ENCODE measurements at regions of chr6 and their contacts with region 1.

Region 1: GRCh38 chr6:11496152-11497060 is 41.1 kb upstream of the TMEM170B start:
- DNase-seq: peak; percentile 80
- H3K4me3 Mint-ChIP-seq: no peak overlapping the region
- H3K27ac Mint-ChIP-seq: no peak overlapping the region
- H3K4me1 Mint-ChIP-seq: no peaks in the 10 kb centered on the region
- H3K27me3 Mint-ChIP-seq: no peaks in the 10 kb centered on the region

Region 2: DNA sequence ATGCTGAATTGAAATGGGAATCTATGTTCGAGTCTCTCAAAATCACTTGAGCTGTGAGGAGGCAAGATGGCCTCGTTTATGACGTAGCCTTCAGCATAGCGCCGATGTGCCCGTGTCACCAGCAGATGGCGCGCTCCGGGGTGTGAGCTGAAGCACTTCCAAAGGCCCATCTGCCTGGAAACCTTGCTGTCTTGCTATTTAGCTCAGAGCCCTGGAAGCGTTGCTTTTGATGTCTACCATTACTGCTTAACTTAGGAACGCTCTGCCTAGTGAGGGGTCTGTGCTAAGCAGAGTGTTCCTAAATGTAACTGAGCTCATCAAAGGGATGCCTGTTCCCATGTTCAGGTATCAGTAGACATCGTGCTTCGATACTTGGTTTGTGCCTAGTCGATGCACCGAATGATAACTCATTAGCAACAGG is 541.8 kb before region 1 on chr6:
- CTCF ChIA-PET with region 1: interaction called, 34 read pairs
- DNase-seq: peak; percentile 79
- H3K4me3 Mint-ChIP-seq: no peak overlapping the region
- H3K27ac Mint-ChIP-seq: no peak overlapping the region
- H3K4me1 Mint-ChIP-seq: no peaks in the 10 kb centered on the region
- H3K27me3 Mint-ChIP-seq: peaks cover 15% of the 10 kb centered on the region

Region 3: DNA sequence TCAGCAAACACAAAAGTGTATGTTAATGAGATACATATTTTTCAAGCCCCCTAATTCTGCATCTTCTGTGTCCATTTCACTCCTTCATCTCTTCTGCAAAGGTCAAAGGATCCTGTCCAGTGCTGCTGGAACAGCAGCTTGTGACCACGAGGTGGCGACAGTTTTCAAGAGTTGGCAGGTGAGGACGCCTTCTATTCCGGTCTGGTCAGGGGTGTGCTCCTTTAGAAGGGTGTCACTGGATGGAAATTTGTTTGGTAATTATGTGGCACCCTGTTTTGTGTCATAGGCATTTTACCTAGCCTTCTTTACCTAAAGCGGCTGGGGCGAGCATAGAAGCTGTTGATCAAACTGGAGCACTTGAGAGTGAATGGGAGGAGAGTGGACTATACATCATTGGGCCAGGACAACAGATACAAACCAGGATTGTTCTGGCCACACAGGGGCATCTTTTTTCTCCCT is 352.0 kb before region 1 on chr6:
- CTCF ChIA-PET with region 1: interaction called, 101 read pairs
- DNase-seq: peak; percentile 83
- H3K4me3 Mint-ChIP-seq: no peak overlapping the region
- H3K27ac Mint-ChIP-seq: no peak overlapping the region
- H3K4me1 Mint-ChIP-seq: no peaks in the 10 kb centered on the region
- H3K27me3 Mint-ChIP-seq: peaks cover 15% of the 10 kb centered on the region

Region 4: GRCh38 chr6:11172501-11173332 is 323.7 kb before region 1 on chr6:
- CTCF ChIA-PET with region 1: interaction called, 69 read pairs
- DNase-seq: peak; percentile 80
- H3K4me3 Mint-ChIP-seq: no peak overlapping the region
- H3K27ac Mint-ChIP-seq: no peak overlapping the region
- H3K4me1 Mint-ChIP-seq: peaks cover 13% of the 10 kb centered on the region
- H3K27me3 Mint-ChIP-seq: peaks cover 3% of the 10 kb centered on the region

Region 5: GRCh38 chr6:11381801-11382513 is 114.4 kb before region 1 on chr6:
- CTCF ChIA-PET with region 1: interaction called, 18 read pairs
- DNase-seq: peak; percentile 83
- H3K4me3 Mint-ChIP-seq: peak overlapping the region; percentile 86
- H3K27ac Mint-ChIP-seq: peak overlapping the region; percentile 96
- H3K4me1 Mint-ChIP-seq: peaks cover 62% of the 10 kb centered on the region
- H3K27me3 Mint-ChIP-seq: peaks cover 8% of the 10 kb centered on the region

Region 6: DNA sequence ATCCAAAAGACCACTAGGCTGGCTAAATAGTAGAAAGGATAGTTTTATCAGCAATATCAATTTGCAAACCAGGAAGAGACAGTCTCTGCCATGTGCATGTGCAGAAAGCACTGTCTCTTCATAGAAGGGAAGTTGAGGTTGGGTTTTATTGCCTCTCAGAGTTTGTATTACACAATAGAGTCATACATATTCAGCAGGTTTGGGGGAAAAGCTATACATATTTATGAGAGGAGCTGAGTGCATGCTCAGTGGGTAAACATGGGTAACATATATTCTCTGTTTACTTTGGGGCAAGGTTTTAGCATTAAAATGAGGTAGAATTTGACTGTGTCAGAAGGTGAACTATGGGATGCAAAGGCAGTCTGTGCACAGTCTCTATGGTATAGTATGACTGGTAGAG is 56.0 kb after region 1 on chr6:
- CTCF ChIA-PET with region 1: no interaction called
- DNase-seq: no peak
- H3K4me3 Mint-ChIP-seq: no peak overlapping the region
- H3K27ac Mint-ChIP-seq: no peak overlapping the region
- H3K4me1 Mint-ChIP-seq: no peaks in the 10 kb centered on the region
- H3K27me3 Mint-ChIP-seq: peaks cover 6% of the 10 kb centered on the region

Region 7: DNA sequence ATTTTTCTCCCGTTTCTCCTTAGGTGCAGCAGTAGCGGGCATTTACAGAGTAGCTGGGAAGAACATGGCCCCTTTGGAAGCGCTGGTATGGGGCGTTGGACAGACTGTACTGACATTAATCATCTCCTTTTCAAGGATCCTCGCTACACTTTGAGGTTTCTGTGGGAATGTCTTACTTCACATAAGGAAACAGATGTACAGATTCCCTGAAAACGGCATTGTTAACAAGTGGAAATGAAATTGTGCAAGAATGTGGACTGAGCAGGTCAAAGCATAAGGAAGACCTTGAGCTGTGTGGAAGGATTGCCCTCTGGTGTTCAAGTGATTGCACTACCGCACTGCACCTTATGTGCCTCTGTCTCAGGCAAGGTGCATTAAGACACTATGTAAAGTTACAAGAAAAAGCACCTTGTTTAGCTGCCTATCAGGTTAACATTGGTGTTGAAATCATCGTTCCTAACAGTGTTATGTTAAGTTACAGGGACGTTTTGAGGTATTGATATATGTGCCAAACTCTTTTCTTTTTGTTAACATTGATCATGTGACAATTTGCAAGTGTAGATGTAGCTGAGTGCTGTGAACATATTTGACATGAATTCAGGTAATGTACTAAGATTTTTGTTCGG is 79.1 kb after region 1 on chr6:
- CTCF ChIA-PET with region 1: interaction called, 16 read pairs
- DNase-seq: peak; percentile 68
- H3K4me3 Mint-ChIP-seq: no peak overlapping the region
- H3K27ac Mint-ChIP-seq: no peak overlapping the region
- H3K4me1 Mint-ChIP-seq: no peaks in the 10 kb centered on the region
- H3K27me3 Mint-ChIP-seq: no peaks in the 10 kb centered on the region

Region 8: GRCh38 chr6:11770546-11771466 is 274.4 kb after region 1 on chr6:
- CTCF ChIA-PET with region 1: no interaction called
- DNase-seq: no peak
- H3K4me3 Mint-ChIP-seq: no peak overlapping the region
- H3K27ac Mint-ChIP-seq: no peak overlapping the region
- H3K4me1 Mint-ChIP-seq: no peaks in the 10 kb centered on the region
- H3K27me3 Mint-ChIP-seq: no peaks in the 10 kb centered on the region

Measured in activated naive CD4-positive, alpha-beta T cell treated with anti-CD3 and anti-CD28 coated beads, Interleukin-2, amount 10 ng/mL, durations not matched to agents 7 days and 5 days (primary cell).